Natural killer cell (primary cell): ENCODE measurements at regions of chr3 and their contacts with region 1.

Region 1: DNA sequence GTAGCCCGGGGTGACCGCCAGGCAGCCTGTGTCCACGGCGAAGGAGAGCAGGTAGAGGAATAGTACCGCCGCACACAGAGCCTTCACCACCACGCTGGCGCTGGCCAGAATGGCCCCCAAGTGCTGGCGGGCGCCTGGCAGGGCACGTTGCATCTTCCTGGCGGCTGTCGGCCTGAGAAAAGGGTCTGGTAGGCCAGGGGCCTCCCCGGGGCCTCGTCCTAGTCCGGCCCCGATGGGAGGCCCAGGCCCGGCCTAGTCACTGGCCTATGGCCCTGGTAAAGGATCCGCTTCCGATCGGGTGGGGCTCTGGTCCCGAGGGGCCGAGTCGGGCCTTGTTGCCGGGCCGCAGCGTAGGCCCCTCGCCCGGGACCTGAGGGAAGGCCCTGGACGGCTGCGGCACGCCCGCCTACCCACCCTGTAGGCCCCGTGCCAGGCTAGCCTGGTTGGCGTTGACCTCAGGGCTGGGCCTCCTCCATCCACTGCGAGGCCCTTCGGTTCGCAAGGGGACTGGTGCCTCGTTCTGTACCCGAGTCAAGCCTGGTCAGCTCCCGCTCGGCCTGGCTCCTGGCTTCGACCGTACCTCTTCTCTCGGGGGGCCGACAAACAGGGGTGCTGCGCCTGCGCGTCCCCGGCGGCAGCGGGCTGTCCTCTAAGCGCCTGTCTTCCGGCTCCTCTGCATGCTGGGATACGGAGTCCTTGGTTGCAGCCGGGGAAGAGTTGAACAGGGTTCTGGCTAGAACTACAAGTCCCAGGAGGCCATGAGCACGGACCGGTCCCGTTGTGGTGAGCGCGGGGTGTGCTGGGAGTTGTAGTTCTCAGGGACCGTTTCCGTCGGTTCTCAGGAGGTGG is at the start of gene TMEM115:
- DNase-seq: peak; percentile 86 to 98
- ATAC-seq: peak; percentile 100
- H3K4me3 ChIP-seq: peak within 1 kb of the TSS; percentile 76
- H3K4me3 Mint-ChIP-seq: peak within 1 kb of the TSS; percentile 99
- H3K27ac ChIP-seq: peak within 1 kb of the TSS; percentile 70
- H3K27ac Mint-ChIP-seq: peak within 1 kb of the TSS; percentile 92 to 96
- H3K4me1 ChIP-seq: peaks cover 46% of the 10 kb centered on the region
- H3K4me1 Mint-ChIP-seq: peaks cover 30 to 49% of the 10 kb centered on the region in 2 donors
- H3K27me3 ChIP-seq: no peaks in the 10 kb centered on the region
- H3K27me3 Mint-ChIP-seq: no peaks in the 10 kb centered on the region
- CTCF ChIP-seq: no peak
- total RNA-seq, gene TMEM115: 15.3 to 24.3 (median 22.7) TPM

Region 2: GRCh38 chr3:50245831-50246516 is 113.2 kb before region 1 on chr3:
- intact Hi-C with region 1: no loop called
- DNase-seq: peak; percentile 96 to 98
- ATAC-seq: peak; percentile 76 to 92 (median 84)
- H3K4me3 ChIP-seq: peak overlapping the region; percentile 24
- H3K4me3 Mint-ChIP-seq: peak overlapping the region; percentile 86
- H3K27ac ChIP-seq: peak overlapping the region; percentile 85
- H3K27ac Mint-ChIP-seq: peak overlapping the region; percentile 95
- H3K4me1 ChIP-seq: peaks cover 100% of the 10 kb centered on the region
- H3K4me1 Mint-ChIP-seq: peaks cover 69 to 88% of the 10 kb centered on the region in 2 donors
- H3K27me3 ChIP-seq: no peaks in the 10 kb centered on the region
- H3K27me3 Mint-ChIP-seq: no peaks in the 10 kb centered on the region
- CTCF ChIP-seq: peak; percentile 98

Region 3: DNA sequence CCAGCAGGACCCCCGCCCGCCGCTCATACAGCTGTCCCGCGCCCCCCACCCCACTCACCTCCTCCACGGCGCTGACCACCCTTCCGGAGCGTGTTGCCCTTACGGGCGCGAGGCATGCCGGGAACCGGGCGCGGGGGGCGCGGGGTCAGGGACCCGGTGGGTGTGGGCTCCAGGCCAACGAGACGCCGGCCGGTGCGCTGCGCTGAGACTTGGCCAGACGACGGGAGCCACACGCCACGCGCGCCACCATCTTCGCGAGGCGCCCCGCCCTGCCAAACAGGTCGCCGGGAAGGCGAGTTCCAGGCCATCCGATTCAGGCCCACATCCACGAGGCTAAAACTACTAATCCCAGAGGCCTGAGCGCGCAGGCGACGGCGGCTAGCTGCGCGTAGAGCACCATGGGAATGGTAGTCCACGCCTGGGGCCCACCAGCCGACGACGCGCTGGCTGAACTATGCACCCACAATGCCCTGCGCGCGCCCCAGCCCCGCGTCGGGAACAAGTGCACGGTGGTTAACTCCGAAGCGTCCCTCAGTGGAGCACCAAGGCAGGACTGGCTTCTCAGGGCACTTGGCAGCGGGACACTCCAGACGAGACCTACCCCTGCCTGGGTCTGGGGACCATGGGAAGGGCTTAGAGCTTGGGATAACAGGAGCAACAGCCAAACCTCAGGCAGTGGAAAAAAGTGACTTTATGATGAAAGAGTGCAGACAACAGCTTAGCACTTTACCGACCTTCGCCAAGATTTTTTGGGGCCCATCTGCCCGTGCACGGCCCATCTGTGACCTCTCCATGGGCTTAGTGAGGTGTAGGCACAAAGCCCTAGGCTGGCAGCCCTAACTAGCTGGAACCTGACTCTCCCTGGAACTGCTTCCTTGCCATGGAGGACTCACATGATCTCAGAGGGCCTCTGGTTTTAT is 66.7 kb before region 1 on chr3 and contains the start of gene IFRD2:
- intact Hi-C with region 1: loop called (anchors 2 kb)
- DNase-seq: peak; percentile 90 to 98
- ATAC-seq: peak; percentile 98 to 99 (median 98)
- H3K4me3 ChIP-seq: peak within 1 kb of the TSS; percentile 62
- H3K4me3 Mint-ChIP-seq: peak within 1 kb of the TSS; percentile 91
- H3K27ac ChIP-seq: peak within 1 kb of the TSS; percentile 57
- H3K27ac Mint-ChIP-seq: peak within 1 kb of the TSS; percentile 93 to 96
- H3K4me1 ChIP-seq: peaks cover 18% of the 10 kb centered on the region
- H3K4me1 Mint-ChIP-seq: peaks cover 15 to 18% of the 10 kb centered on the region in 2 donors
- H3K27me3 ChIP-seq: no peaks in the 10 kb centered on the region
- H3K27me3 Mint-ChIP-seq: no peaks in the 10 kb centered on the region
- CTCF ChIP-seq: no peak
- total RNA-seq, gene IFRD2: 27.8 to 39.1 (median 32.1) TPM

Region 4: DNA sequence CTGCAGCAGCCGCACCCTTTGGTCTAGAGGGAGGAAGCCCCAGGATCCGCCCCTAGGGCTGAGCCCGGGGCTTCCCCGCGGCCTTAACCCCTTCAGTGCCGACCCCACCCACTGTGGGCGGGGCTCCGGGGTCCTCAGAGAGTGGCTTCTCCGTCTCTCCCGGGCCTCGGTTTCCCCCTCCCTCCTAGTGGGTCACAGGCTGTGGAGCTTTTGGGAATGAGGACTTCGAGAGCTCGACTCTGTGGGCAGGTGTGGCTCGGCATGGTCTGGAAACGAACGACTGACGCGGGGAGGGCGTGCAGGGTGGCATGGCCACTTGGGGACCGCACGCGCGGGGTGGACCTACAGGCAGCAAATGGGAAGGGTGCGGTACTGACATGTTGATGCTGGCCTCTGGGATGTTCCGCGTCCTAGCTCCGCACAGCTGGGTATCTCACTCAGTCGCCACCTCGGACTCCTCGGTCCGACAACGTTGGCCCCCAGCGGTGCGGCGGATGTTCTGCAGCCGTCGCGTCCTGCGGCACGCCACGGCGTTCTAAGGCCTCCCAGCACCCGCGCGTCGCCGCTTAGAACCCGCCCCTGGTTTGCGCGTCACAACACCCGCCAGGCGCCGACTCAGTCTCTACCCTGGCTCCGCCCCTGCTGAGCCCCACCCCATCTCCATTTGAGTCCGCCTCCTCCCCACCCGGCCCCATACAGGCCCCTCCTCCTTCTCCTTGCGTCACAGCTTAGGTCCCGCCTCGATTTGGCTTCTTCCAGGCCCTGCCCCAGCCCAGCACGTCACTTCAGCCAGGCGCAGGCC is 60.1 kb before region 1 on chr3 and contains the starts of genes HYAL3 and NAA80:
- intact Hi-C with region 1: loop called (anchors 1 kb)
- DNase-seq: peak; percentile 99 to 100
- ATAC-seq: peak; percentile 90 to 97 (median 91)
- H3K4me3 ChIP-seq: peak within 1 kb of the TSS; percentile 99
- H3K4me3 Mint-ChIP-seq: peak within 1 kb of the TSS; percentile 97
- H3K27ac ChIP-seq: peak within 1 kb of the TSS; percentile 96
- H3K27ac Mint-ChIP-seq: peak within 1 kb of the TSS; percentile 95 to 97
- H3K4me1 ChIP-seq: peaks cover 27% of the 10 kb centered on the region
- H3K4me1 Mint-ChIP-seq: peaks cover 18 to 33% of the 10 kb centered on the region in 2 donors
- H3K27me3 ChIP-seq: no peaks in the 10 kb centered on the region
- H3K27me3 Mint-ChIP-seq: no peaks in the 10 kb centered on the region
- CTCF ChIP-seq: peak; percentile 45
- total RNA-seq, gene HYAL3: 0.93 to 2.0 (median 1.2) TPM
- total RNA-seq, gene NAA80: 22.2 to 30.3 (median 29.6) TPM

Region 5: DNA sequence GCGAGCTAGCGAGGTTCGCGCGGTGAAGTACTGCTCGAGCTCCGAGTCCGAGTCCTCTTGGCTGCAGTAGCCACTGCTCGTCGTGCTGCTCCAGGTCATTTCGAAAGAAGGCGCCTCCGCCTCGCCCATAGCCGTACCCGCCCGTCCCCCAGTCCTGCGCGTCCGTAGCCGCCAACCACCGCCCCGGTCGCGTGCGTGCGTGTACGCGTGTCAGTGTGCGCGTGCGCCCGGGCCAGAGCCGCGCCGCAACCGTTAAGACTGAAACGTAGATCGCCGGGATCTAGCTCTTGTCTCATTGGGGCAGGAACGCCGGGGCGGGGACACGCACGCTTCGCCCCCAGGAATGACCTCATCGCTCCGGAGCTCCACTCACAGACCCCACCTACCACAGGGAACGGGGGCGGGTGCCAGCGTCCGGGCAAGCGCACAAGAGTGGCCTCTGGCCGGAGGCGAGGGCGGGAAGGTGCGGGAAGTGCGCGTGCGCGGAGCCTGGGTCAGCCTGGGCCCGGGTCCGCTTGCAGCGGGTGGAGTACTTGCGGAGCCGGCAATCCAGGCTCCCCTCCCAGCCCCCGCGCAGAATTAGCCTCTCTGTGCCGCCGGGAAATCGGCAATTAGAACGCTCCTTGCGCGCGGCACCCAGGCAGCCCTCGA is 21.8 kb before region 1 on chr3:
- intact Hi-C with region 1: loop called (anchors 2 kb)
- DNase-seq: peak; percentile 85 to 97
- ATAC-seq: peak; percentile 67 to 80 (median 70)
- H3K4me3 ChIP-seq: peak overlapping the region; percentile 80
- H3K4me3 Mint-ChIP-seq: peak overlapping the region; percentile 98
- H3K27ac ChIP-seq: peak overlapping the region; percentile 93
- H3K27ac Mint-ChIP-seq: peak overlapping the region; percentile 93 to 96
- H3K4me1 ChIP-seq: peaks cover 76% of the 10 kb centered on the region
- H3K4me1 Mint-ChIP-seq: peaks cover 57 to 86% of the 10 kb centered on the region in 2 donors
- H3K27me3 ChIP-seq: no peaks in the 10 kb centered on the region
- H3K27me3 Mint-ChIP-seq: no peaks in the 10 kb centered on the region
- CTCF ChIP-seq: no peak

Region 6: DNA sequence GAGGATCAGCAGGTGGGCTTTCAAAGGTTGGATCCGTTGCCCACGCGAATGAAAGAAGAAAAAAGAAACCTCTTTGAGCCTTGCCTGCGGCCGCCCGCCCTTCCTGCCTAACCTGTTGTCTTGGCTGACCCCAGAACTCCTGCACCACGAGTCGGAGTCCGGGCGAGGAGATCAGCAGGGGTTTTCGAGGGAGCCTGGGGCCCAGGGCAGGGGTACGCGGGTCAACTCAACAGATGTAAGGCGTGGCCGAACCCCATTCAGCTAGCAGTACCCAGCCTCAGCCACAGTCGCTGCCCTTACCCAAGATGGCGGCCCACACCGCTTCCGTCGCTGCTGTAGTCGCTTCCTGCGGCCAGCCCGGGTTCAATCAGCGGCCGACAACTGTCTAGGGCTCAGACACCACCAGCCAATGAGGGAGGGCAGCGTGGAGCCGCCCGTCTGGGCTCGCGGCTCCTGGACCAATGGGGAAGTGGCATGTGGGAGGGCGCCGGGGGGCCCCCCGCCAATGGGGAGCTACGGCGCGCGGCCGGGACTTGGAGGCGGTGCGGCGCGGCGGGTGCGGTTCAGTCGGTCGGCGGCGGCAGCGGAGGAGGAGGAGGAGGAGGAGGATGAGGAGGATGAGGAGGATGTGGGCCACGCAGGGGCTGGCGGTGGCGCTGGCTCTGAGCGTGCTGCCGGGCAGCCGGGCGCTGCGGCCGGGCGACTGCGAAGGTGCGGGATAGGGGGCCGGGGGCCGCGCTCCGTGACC is 1025.8 kb after region 1 on chr3 and contains the start of gene MANF:
- intact Hi-C with region 1: loop called (anchors 10 kb)
- DNase-seq: peak; percentile 96 to 98
- ATAC-seq: peak; percentile 93 to 98 (median 94)
- H3K4me3 ChIP-seq: peak within 1 kb of the TSS; percentile 81
- H3K4me3 Mint-ChIP-seq: peak within 1 kb of the TSS; percentile 97
- H3K27ac ChIP-seq: peak within 1 kb of the TSS; percentile 85
- H3K27ac Mint-ChIP-seq: peak within 1 kb of the TSS; percentile 96 to 98
- H3K4me1 ChIP-seq: peaks cover 34% of the 10 kb centered on the region
- H3K4me1 Mint-ChIP-seq: peaks cover 45 to 46% of the 10 kb centered on the region in 2 donors
- H3K27me3 ChIP-seq: no peaks in the 10 kb centered on the region
- H3K27me3 Mint-ChIP-seq: no peaks in the 10 kb centered on the region
- CTCF ChIP-seq: peak; percentile 10
- total RNA-seq, gene MANF: 51.7 to 58.6 (median 58.3) TPM